Activated CD4-positive, alpha-beta T cell treated with anti-CD3 and anti-CD28 coated beads for 36 hours (primary cell): ENCODE measurements at regions of chr22 and their contacts with region 1.

Region 1: DNA sequence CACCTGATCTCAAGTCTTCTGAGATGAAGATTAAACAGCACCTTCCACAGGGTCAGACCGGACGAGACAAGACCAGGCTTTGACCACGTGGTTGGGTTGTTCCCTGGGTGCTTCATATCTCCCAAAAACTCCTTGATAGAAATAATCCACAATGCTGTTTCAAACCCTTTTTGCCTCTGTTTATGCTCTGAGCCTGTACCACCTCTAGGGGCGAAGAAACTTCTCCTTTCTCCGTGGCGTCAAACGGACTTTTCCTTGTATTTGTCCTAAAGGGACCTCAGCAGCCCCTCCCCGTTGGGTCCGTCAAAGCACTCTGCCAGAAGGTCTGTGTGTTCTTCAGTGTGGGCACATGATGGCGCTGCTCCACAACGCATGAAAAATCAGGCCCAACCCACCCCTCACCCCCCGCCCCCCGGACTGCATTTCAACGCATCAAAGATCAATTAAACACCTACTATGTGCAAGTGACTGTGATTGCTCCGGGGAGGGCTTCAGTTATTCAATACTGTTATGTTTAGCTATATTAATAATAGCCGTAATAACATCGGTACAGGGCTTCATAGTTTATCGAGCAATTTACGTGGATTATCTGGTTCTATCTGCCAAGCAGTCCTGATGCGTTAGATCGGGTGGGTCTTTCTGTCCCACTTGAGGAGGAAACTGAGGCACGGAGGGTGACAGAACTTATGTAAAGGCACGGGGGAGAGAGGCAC is 17.3 kb upstream of the EIF3D start:
- DNase-seq: peak; percentile 72
- ATAC-seq: peak; percentile 59
- H3K4me3 Mint-ChIP-seq: no peak overlapping the region
- H3K27ac Mint-ChIP-seq: no peak overlapping the region
- H3K4me1 Mint-ChIP-seq: peaks cover 8% of the 10 kb centered on the region
- H3K27me3 Mint-ChIP-seq: peaks cover 8% of the 10 kb centered on the region

Region 2: GRCh38 chr22:36454916-36455570 is 91.2 kb before region 1 on chr22:
- CTCF ChIA-PET with region 1: no interaction called
- POLR2A ChIA-PET with region 1: no interaction called
- intact Hi-C with region 1: no loop called
- DNase-seq: peak; percentile 98
- ATAC-seq: peak; percentile 82
- H3K4me3 Mint-ChIP-seq: peak overlapping the region; percentile 71
- H3K27ac Mint-ChIP-seq: peak overlapping the region; percentile 67
- H3K4me1 Mint-ChIP-seq: peaks cover 44% of the 10 kb centered on the region
- H3K27me3 Mint-ChIP-seq: no peaks in the 10 kb centered on the region

Region 3: DNA sequence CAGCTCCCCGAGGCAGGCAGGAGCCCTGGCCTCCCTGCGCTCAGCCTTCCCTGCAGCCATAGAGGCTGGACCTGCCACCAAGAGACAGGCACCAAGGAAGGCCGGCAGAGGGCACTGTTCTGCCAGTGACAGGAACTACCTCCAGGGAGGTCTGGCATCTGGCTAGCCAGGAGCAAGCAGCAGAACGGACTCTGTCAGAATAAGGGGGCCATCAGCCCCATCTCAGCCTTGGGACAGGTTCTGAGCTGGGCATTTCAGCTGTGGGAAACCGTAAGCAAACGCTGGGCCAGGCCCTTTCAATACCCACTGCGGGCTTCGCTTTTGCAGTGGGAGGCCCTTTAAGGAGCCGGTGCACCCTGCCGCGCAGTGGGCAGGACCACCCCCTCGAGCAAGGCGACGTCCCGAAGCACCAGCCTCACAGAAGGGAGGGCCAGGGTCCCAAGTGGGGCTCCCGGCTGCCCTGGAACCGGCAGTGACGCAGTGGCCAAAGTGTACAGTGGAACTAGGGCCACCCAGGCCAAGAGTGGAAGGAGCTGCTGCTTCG is 211.5 kb after region 1 on chr22:
- CTCF ChIA-PET with region 1: no interaction called
- POLR2A ChIA-PET with region 1: no interaction called
- intact Hi-C with region 1: loop called in 1 of 2 experiments (anchors 1 kb)
- DNase-seq: peak; percentile 89
- ATAC-seq: peak; percentile 93
- H3K4me3 Mint-ChIP-seq: no peak overlapping the region
- H3K27ac Mint-ChIP-seq: peak overlapping the region; percentile 37
- H3K4me1 Mint-ChIP-seq: no peaks in the 10 kb centered on the region
- H3K27me3 Mint-ChIP-seq: peaks cover 4% of the 10 kb centered on the region